ENCODE measurements at regions of chr19 and their contacts with region 1.

Region 1: DNA sequence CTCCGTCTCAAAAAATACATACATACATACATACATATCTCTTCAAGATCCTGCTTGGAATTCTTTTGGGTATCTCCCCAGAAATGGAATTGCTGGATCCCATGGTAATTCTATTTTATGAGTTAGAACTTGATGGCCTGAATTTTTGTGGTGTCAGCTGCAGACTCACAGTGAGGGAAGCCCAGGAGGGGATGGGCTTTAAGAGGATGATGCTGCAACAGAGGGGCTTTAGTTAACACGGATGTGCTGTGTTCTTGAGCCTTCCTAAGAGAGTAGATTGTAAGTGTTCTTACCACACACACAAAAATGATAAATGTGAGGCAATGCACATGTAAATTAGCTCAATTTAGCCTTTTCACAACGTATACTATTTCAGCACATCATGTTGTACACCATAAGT is 31.8 kb downstream of the CACNG6 start:
- DNase-seq: no peak
- H3K4me3 ChIP-seq: no peak overlapping the region
- H3K27ac ChIP-seq: no peak overlapping the region
- H3K4me1 ChIP-seq: no peaks in the 10 kb centered on the region
- H3K27me3 ChIP-seq: no peaks in the 10 kb centered on the region
- CTCF ChIP-seq: no peak

Region 2: DNA sequence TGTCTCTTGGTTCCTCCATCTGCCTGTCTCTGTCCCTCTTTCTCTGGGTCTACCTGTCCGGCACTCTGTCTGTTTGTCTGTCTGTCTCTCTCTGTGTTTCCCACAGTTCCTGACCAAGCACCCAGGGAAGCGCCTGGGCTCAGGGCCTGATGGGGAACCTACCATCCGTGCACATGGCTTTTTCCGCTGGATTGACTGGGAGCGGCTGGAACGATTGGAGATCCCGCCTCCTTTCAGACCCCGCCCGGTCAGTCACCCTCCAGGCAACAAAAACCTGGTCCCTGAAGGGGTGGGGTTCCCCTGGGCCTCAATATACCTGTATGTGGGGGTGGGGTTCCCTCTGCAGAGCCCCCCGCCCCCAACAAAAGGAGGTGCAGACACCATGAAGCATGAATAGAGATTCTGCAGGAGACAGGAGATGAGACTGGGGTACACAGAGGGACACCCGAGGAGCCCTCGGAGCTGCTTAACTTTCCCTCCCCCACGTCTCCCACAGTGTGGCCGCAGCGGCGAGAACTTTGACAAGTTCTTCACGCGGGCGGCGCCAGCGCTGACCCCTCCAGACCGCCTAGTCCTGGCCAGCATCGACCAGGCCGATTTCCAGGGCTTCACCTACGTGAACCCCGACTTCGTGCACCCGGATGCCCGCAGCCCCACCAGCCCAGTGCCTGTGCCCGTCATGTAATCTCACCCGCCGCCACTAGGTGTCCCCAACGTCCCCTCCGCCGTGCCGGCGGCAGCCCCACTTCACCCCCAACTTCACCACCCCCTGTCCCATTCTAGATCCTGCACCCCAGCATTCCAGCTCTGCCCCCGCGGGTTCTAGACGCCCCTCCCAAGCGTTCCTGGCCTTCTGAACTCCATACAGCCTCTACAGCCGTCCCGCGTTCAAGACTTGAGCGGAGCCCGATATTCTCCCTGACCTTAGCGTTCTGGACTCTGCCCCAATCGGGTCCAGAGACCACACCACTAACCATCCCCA is 116.7 kb before region 1 on chr19:
- intact Hi-C with region 1: loop called (anchors 5 kb)
- DNase-seq: peak; percentile 45
- H3K4me3 ChIP-seq: no peak overlapping the region
- H3K27ac ChIP-seq: no peak overlapping the region
- H3K4me1 ChIP-seq: no peaks in the 10 kb centered on the region
- H3K27me3 ChIP-seq: peaks cover 32% of the 10 kb centered on the region
- CTCF ChIP-seq: peak; percentile 79

Region 3: GRCh38 chr19:54257116-54257480 is 233.9 kb after region 1 on chr19 and contains the start of gene LILRB5:
- intact Hi-C with region 1: no loop called
- DNase-seq: no peak
- H3K4me3 ChIP-seq: no peak within 1 kb of the TSS
- H3K27ac ChIP-seq: no peak within 1 kb of the TSS
- H3K4me1 ChIP-seq: no peaks in the 10 kb centered on the region
- H3K27me3 ChIP-seq: peaks cover 3% of the 10 kb centered on the region
- CTCF ChIP-seq: no peak
- total RNA-seq, gene LILRB5: 2.2 to 8.6 TPM

Measured in colonic mucosa (tissue), 4 donors.